CD4-positive, alpha-beta memory T cell (primary cell): ENCODE measurements at regions of chr2 and their contacts with region 1.

Region 1: DNA sequence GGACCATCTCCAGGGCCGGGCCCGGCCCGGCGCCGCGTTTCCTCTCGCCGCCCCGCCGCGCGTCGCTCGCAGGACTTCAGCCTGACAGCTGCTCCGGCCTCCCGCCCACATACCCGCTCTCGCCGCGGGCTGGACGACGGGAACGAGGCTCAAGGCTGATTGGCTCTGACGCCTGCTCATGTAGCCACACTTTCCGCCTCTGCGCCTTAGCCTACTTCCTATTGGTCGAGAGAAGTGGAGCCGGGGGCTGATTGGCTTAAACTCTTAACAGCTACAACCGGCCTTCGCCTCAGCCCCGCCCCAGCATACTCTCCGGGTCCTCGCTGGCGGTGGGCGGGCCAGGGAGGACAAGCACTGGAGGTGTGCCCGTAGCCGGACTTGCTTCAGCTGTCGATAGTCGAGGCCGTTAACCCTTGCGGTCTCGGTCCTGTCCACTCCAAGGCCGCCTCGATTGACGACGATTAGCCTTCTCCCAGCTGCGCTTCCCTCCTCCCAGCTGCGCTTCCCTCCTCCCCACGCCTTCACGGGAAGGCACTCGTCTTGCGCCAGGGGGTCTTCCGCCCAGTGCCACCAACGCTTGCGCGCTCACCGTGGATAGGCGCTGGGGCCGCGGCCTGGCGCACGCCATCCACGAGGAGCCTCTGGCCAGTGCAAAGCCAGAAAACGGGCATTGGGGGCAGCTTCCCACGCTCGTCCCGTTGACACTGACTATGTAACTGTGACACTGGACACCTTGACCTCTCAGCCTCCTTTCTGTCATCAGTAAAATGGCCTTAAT is at the start of gene PRADC1:
- DNase-seq: peak; percentile 92 to 97 (median 94)
- H3K4me3 ChIP-seq: peak within 1 kb of the TSS; percentile 86 to 99
- H3K4me3 Mint-ChIP-seq: peak within 1 kb of the TSS; percentile 91 to 99 (median 98)
- H3K27ac ChIP-seq: peak within 1 kb of the TSS; percentile 91
- H3K27ac Mint-ChIP-seq: peak within 1 kb of the TSS; percentile 83 to 97 (median 91)
- H3K4me1 ChIP-seq: peaks cover 33% of the 10 kb centered on the region
- H3K4me1 Mint-ChIP-seq: peaks cover 26 to 56% (median 34%) of the 10 kb centered on the region in 4 donors
- H3K27me3 ChIP-seq: no peaks in the 10 kb centered on the region
- H3K27me3 Mint-ChIP-seq: no peaks in the 10 kb centered on the region
- total RNA-seq, gene PRADC1: 7.0 to 7.4 TPM

Region 2: GRCh38 chr2:73071360-73072133 is 161.8 kb before region 1 on chr2 and contains the start of gene SFXN5:
- CTCF ChIA-PET with region 1: no interaction called
- POLR2A ChIA-PET with region 1: interaction called, 17 read pairs
- intact Hi-C with region 1: loop called (anchors 1 kb)
- DNase-seq: peak; percentile 90 to 95 (median 90)
- H3K4me3 ChIP-seq: peak within 1 kb of the TSS; percentile 88 to 90
- H3K4me3 Mint-ChIP-seq: peak within 1 kb of the TSS; percentile 91 to 96 (median 94)
- H3K27ac ChIP-seq: peak within 1 kb of the TSS; percentile 65
- H3K27ac Mint-ChIP-seq: peak within 1 kb of the TSS; percentile 91 to 97 (median 93)
- H3K4me1 ChIP-seq: peaks cover 14% of the 10 kb centered on the region
- H3K4me1 Mint-ChIP-seq: peaks cover 17 to 47% (median 20%) of the 10 kb centered on the region in 4 donors
- H3K27me3 ChIP-seq: no peaks in the 10 kb centered on the region
- H3K27me3 Mint-ChIP-seq: peaks cover 0 to 1% of the 10 kb centered on the region in 2 donors
- total RNA-seq, gene SFXN5: 6.5 to 10.0 TPM

Region 3: GRCh38 chr2:73218298-73218697 is 15.0 kb before region 1 on chr2:
- CTCF ChIA-PET with region 1: interaction called, 77 read pairs
- POLR2A ChIA-PET with region 1: interaction called, 51 read pairs
- intact Hi-C with region 1: loop called (anchors 1 kb)
- DNase-seq: no peak
- H3K4me3 ChIP-seq: no peak overlapping the region
- H3K4me3 Mint-ChIP-seq: no peak overlapping the region
- H3K27ac ChIP-seq: no peak overlapping the region
- H3K27ac Mint-ChIP-seq: no peak overlapping the region
- H3K4me1 ChIP-seq: peaks cover 20% of the 10 kb centered on the region
- H3K4me1 Mint-ChIP-seq: peaks cover 20 to 27% (median 23%) of the 10 kb centered on the region in 4 donors
- H3K27me3 ChIP-seq: no peaks in the 10 kb centered on the region
- H3K27me3 Mint-ChIP-seq: no peaks in the 10 kb centered on the region

Region 4: DNA sequence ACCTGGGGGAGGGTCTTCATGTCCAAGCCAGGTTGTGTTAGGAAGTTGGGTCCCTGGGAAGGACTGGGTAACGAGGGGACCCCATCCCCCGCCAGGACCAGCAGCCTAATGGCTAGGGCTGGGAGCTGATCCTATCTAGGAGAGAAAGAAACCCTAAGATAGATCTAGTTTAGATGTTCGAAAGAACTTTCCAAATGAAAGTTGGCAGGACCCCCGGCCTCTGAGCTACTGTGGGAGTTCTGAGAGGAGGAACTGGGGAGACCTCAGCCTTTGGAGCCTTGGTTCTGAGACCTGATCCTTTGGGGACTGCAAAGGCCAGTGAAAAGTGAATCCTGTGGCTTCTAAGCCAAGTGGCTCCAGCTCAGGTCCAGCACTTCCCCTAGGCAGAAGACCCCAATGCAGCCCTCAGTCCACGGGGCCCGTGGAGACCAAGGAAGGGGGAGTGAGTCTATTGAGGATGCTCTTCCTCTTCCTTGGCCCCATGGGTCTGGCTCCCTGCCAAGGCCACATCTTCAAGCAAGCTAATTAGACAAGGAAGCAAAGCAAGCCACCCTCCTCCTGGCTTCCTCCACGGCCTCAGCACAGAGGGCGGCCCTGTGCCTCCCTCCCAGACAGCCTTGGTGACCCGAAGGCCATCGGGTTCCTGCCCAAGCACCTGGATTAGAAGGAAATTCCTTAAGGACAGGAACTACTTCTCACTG is 24.2 kb after region 1 on chr2:
- CTCF ChIA-PET with region 1: interaction called, 3 read pairs
- POLR2A ChIA-PET with region 1: interaction called, 11 read pairs
- intact Hi-C with region 1: no loop called
- DNase-seq: peak in 3 of 5 donors; percentile 21 to 36 (median 24)
- H3K4me3 ChIP-seq: no peak overlapping the region
- H3K4me3 Mint-ChIP-seq: no peak overlapping the region
- H3K27ac ChIP-seq: no peak overlapping the region
- H3K27ac Mint-ChIP-seq: peak overlapping the region in 4 of 7 donors; percentile 22 to 75 (median 62)
- H3K4me1 ChIP-seq: peaks cover 8% of the 10 kb centered on the region
- H3K4me1 Mint-ChIP-seq: peaks cover 1 to 21% (median 5%) of the 10 kb centered on the region in 4 donors
- H3K27me3 ChIP-seq: no peaks in the 10 kb centered on the region
- H3K27me3 Mint-ChIP-seq: no peaks in the 10 kb centered on the region

Region 5: DNA sequence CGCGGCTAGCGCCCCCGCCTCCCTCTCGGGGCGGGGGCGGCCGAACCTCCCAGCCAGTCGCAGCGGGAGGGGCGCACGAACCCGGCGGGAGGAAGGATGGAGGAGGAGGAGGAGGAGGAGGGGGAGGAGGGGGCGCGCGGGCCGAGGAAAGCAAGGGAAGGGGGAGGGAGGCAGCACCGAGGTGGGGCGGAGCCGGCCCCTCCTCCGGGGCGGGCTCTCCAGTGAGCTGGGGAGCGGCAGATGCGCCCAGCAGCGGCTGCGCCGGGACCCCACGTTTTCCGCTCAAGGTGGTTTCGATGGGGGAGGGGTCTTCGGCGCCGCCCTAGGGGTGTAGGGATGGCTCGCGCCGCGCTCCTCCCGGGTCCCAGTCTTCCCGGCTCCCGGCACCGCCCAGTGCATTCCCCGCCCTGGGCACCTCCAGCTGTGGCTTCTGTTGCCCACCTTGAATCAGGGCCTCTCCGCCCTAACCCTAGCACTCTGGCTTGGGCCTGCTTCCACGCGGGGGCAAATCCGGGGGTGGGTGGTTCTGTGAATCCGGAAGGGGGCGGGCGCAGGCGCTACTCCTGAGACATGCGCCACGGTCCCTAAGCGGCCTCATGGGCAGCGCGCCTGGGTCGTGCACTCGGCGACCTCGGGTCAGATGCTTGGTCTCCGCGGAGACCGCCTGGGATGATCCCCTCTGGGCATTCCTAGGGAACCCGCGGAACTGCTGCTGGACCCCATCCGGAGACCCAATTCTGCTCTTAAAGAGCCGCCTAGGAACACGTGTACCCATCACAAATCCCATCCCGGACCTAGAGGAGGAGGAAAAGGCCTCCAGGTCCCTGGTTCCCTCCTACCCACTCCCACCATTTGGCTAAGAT is 51.2 kb after region 1 on chr2 and contains the start of gene FBXO41:
- CTCF ChIA-PET with region 1: interaction called, 54 read pairs
- POLR2A ChIA-PET with region 1: interaction called, 18 read pairs
- intact Hi-C with region 1: loop called (anchors 1 kb)
- DNase-seq: peak; percentile 40 to 62 (median 50)
- H3K4me3 ChIP-seq: peak within 1 kb of the TSS; percentile 32 to 62
- H3K4me3 Mint-ChIP-seq: peak within 1 kb of the TSS; percentile 79 to 89 (median 85)
- H3K27ac ChIP-seq: peak within 1 kb of the TSS; percentile 27
- H3K27ac Mint-ChIP-seq: peak within 1 kb of the TSS in 6 of 7 donors; percentile 16 to 70 (median 57)
- H3K4me1 ChIP-seq: peaks cover 19% of the 10 kb centered on the region
- H3K4me1 Mint-ChIP-seq: peaks cover 7 to 25% (median 16%) of the 10 kb centered on the region in 4 donors
- H3K27me3 ChIP-seq: no peaks in the 10 kb centered on the region
- H3K27me3 Mint-ChIP-seq: peaks cover 4 to 11% of the 10 kb centered on the region in 2 donors
- total RNA-seq, gene FBXO41: 9.8 to 11.4 TPM

Region 6: GRCh38 chr2:73385595-73386341 is 152.4 kb after region 1 on chr2 and contains the start of gene ALMS1:
- CTCF ChIA-PET with region 1: interaction called, 3 read pairs
- POLR2A ChIA-PET with region 1: interaction called, 44 read pairs
- intact Hi-C with region 1: loop called (anchors 1 kb)
- DNase-seq: peak; percentile 86 to 91 (median 91)
- H3K4me3 ChIP-seq: peak within 1 kb of the TSS; percentile 62 to 79
- H3K4me3 Mint-ChIP-seq: peak within 1 kb of the TSS; percentile 91 to 93 (median 92)
- H3K27ac ChIP-seq: peak within 1 kb of the TSS; percentile 77
- H3K27ac Mint-ChIP-seq: peak within 1 kb of the TSS; percentile 96 to 99 (median 98)
- H3K4me1 ChIP-seq: peaks cover 25% of the 10 kb centered on the region
- H3K4me1 Mint-ChIP-seq: peaks cover 28 to 43% (median 34%) of the 10 kb centered on the region in 4 donors
- H3K27me3 ChIP-seq: no peaks in the 10 kb centered on the region
- H3K27me3 Mint-ChIP-seq: peaks cover 0 to 3% of the 10 kb centered on the region in 2 donors
- total RNA-seq, gene ALMS1: 35.5 to 42.9 TPM

Region 7: DNA sequence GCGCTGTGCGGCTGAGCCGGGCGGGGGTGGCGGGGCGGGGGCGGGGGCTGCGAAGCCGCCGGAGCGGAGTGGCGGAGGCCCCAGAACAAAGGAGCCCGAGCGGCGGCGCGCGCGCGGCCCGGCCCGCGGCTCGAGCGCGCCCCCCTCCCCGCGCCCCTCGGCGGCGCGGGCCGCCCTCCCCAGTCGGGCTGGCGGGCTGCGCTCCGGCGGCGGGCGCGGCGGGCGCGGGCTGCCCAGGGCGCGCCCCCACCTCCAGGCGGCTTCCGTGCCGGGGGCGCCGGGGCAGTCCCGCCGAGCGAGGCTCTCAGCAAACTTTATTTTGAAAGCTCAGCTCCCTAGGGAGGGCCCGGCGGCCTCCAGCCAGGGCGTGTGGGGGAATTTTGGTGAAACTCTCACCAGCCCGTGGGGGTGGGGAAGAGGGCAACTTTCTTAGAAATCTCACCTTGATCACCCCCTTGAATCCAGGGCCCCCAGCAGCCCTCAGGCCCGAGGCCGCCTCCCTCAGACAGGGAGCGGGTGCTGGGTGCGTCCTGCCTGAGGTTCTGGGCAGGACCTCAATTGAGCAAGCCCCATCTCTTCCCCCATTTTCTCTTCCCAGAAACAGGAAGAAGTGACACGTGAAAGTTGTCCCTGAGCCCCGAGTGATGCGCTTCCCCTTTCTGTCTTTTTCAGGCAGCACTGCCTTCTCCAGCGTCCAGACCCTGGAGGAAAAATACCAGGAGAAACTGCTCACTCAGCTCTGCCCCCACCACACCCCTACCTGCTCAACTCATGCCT is 752.2 kb after region 1 on chr2:
- CTCF ChIA-PET with region 1: no interaction called
- POLR2A ChIA-PET with region 1: no interaction called
- intact Hi-C with region 1: loop called (anchors 10 kb)
- DNase-seq: peak in 4 of 5 donors; percentile 47 to 76 (median 52)
- H3K4me3 ChIP-seq: peak overlapping the region; percentile 52 to 73
- H3K4me3 Mint-ChIP-seq: peak overlapping the region; percentile 81 to 92 (median 84)
- H3K27ac ChIP-seq: peak overlapping the region; percentile 75
- H3K27ac Mint-ChIP-seq: peak overlapping the region; percentile 34 to 96 (median 87)
- H3K4me1 ChIP-seq: peaks cover 76% of the 10 kb centered on the region
- H3K4me1 Mint-ChIP-seq: peaks cover 59 to 85% (median 70%) of the 10 kb centered on the region in 4 donors
- H3K27me3 ChIP-seq: no peaks in the 10 kb centered on the region
- H3K27me3 Mint-ChIP-seq: no peaks in the 10 kb centered on the region